ENCODE measurements at regions of chr7 and their contacts with region 1.

Region 1: GRCh38 chr7:18666107-18666728 is 170.7 kb downstream of the HDAC9 start:
- DNase-seq: peak; percentile 78
- ATAC-seq: peak; percentile 84
- H3K4me3 Mint-ChIP-seq: no peak overlapping the region
- H3K27ac Mint-ChIP-seq: no peak overlapping the region
- H3K4me1 Mint-ChIP-seq: no peaks in the 10 kb centered on the region
- H3K27me3 Mint-ChIP-seq: no peaks in the 10 kb centered on the region

Region 2: GRCh38 chr7:18352339-18353255 is 313.6 kb before region 1 on chr7:
- CTCF ChIA-PET with region 1: interaction called, 11 read pairs
- POLR2A ChIA-PET with region 1: no interaction called
- DNase-seq: no peak
- ATAC-seq: no peak
- H3K4me3 Mint-ChIP-seq: no peak overlapping the region
- H3K27ac Mint-ChIP-seq: no peak overlapping the region
- H3K4me1 Mint-ChIP-seq: no peaks in the 10 kb centered on the region
- H3K27me3 Mint-ChIP-seq: no peaks in the 10 kb centered on the region

Region 3: GRCh38 chr7:18420748-18421147 is 245.5 kb before region 1 on chr7:
- CTCF ChIA-PET with region 1: no interaction called
- POLR2A ChIA-PET with region 1: no interaction called
- DNase-seq: no peak
- ATAC-seq: no peak
- H3K4me3 Mint-ChIP-seq: no peak overlapping the region
- H3K27ac Mint-ChIP-seq: no peak overlapping the region
- H3K4me1 Mint-ChIP-seq: no peaks in the 10 kb centered on the region
- H3K27me3 Mint-ChIP-seq: no peaks in the 10 kb centered on the region

Region 4: DNA sequence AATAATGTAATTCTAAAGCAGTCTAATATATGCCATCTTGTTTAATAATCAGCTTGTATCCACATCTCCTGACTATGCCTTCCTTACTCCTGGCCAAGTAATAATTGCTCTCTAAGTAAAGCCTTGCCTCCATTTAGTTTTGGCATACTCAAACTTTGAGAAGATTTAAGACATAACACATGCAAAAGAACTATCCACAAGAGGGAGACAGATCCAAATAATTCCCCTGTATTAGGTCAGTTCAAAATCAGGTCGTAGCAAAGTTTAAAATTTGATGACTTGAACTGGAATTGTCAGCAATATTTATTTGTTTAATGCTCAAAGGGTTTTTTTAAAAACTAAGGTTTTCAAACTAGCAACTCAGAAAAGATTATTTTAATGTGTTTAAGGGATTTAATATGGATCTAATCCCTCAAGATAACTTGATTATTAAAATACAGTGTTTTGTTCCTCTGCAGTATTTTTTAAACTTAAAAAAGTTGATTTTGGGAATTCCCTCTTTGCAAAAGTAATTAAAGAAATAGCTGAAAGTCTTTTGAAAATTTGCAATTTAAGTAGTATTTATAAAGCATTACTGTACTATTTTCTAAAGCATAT is 75.4 kb before region 1 on chr7:
- CTCF ChIA-PET with region 1: interaction called, 10 read pairs
- POLR2A ChIA-PET with region 1: no interaction called
- DNase-seq: no peak
- ATAC-seq: no peak
- H3K4me3 Mint-ChIP-seq: no peak overlapping the region
- H3K27ac Mint-ChIP-seq: no peak overlapping the region
- H3K4me1 Mint-ChIP-seq: no peaks in the 10 kb centered on the region
- H3K27me3 Mint-ChIP-seq: no peaks in the 10 kb centered on the region